Heart left ventricle (tissue), 16 donors: ENCODE measurements at regions of chr4 and their contacts with region 1.

Region 1: GRCh38 chr4:14916554-14917297 is 85.6 kb upstream of the CPEB2 start:
- DNase-seq: peak in 4 of 5 donors; percentile 24 to 51 (median 36)
- ATAC-seq: peak; percentile 87 to 95 (median 90)
- H3K4me3 ChIP-seq: no peak overlapping the region
- H3K27ac ChIP-seq: peak overlapping the region in 11 of 12 donors; percentile 50 to 88 (median 76)
- H3K4me1 ChIP-seq: peaks cover 0 to 12% (median 5%) of the 10 kb centered on the region in 12 donors
- H3K27me3 ChIP-seq: no peaks in the 10 kb centered on the region
- CTCF ChIP-seq: no peak
- POLR2A ChIP-seq: no peak

Region 2: GRCh38 chr4:14831406-14831805 is 85.3 kb before region 1 on chr4:
- intact Hi-C with region 1: loop called in 2 of 10 experiments (anchors 5 kb)
- DNase-seq: no peak
- ATAC-seq: no peak
- H3K4me3 ChIP-seq: no peak overlapping the region
- H3K27ac ChIP-seq: no peak overlapping the region
- H3K4me1 ChIP-seq: no peaks in the 10 kb centered on the region
- H3K27me3 ChIP-seq: no peaks in the 10 kb centered on the region
- CTCF ChIP-seq: no peak
- POLR2A ChIP-seq: no peak

Region 3: DNA sequence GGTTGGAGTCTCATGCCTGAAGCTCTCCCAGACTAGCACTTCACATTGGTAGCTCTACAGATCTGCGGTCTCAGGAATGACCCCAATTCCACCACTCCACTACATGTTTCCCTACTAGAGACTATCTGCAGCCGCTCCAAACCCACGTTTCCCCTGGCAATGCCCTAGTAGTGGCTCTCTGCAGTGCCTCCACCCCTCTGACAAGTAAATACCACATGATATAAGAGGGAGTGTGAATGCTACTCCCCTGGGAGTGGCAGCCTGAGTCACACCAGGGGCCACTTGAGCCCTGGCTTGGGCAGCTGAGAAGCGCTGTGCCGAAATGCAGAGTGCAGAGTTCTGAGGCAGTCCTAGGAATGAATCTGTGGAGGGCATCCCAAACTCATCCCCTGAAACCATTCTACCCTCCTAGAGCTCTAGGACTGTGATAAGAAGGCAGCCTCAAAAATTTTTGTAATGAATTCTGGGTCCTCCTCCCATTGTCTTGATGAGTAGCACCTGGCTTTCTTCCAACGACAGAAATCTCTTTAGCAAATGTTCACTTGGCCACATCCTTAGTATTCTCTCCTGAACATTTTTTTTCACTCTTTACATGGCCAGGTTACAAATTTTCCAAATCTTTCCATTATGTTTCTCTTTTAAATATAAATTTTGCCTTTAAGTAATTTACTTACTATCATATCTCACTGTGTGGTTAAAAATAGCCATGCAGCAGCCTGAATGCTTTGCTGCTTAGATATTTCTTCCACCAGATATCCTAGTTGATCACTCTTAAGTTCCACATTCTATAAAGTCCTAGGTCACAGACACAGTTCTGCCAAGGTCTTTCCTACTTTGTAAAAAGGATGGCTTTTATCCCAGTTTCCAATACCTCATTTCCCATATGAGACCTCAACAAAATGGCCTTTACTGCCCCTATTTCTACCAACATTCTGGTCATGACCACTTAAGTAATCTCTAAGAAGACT is 74.6 kb before region 1 on chr4:
- intact Hi-C with region 1: loop called in 1 of 10 experiments (anchors 5 kb)
- DNase-seq: peak; percentile 48 to 78 (median 72)
- ATAC-seq: peak; percentile 81 to 97 (median 96)
- H3K4me3 ChIP-seq: peak overlapping the region in 1 of 12 donors; percentile 5
- H3K27ac ChIP-seq: peak overlapping the region; percentile 4 to 81 (median 55)
- H3K4me1 ChIP-seq: peaks cover 0 to 23% (median 14%) of the 10 kb centered on the region in 12 donors
- H3K27me3 ChIP-seq: no peaks in the 10 kb centered on the region
- CTCF ChIP-seq: no peak
- POLR2A ChIP-seq: no peak